ENCODE measurements at regions of chr4 and their contacts with region 1.

Region 1: DNA sequence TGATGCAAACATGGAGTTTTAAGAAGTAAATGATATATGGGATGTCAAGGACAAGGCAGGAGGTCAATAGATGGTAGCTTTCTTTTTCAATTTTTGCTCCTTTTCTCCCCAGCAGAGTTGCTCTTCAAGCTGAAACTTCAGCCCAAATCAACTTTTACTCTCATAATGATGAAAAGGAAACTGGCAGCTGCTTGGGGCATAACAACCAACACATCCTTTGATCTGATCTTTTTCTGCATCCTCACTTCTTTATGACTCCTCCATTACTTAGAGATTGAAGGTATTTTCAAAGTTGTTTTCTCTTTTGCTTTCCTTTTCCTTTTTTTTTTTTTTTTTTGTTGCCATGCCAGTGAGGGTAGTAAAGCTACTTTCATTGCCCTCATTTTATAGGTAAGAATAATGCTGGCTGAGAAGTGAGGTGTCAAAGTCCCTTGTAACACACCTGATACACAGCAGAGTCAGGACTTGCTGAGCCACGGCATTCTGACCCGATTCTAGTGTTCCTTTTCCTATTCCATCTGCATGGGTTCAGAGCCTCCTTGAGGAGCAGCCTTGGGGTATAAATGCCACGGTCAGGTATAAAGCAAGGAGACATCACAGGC is 26.9 kb downstream of the SLC2A9 start:
- DNase-seq: no peak
- H3K4me3 ChIP-seq: no peak overlapping the region
- H3K27ac ChIP-seq: no peak overlapping the region
- H3K4me1 ChIP-seq: peaks cover 0 to 6% (median 0%) of the 10 kb centered on the region in 4 donors
- H3K27me3 ChIP-seq: no peaks in the 10 kb centered on the region
- CTCF ChIP-seq: no peak
- EP300 ChIP-seq: no peak
- POLR2A ChIP-seq: no peak

Region 2: GRCh38 chr4:9962611-9963314 is 31.6 kb before region 1 on chr4:
- intact Hi-C with region 1: loop called (anchors 2 kb)
- DNase-seq: no peak
- H3K4me3 ChIP-seq: no peak overlapping the region
- H3K27ac ChIP-seq: no peak overlapping the region
- H3K4me1 ChIP-seq: no peaks in the 10 kb centered on the region
- H3K27me3 ChIP-seq: no peaks in the 10 kb centered on the region
- CTCF ChIP-seq: no peak
- EP300 ChIP-seq: no peak
- POLR2A ChIP-seq: no peak

Measured in stomach (tissue), 19 donors.